MCF 10A (cell line): ENCODE measurements at regions of chr1 and their contacts with region 1.

Region 1: DNA sequence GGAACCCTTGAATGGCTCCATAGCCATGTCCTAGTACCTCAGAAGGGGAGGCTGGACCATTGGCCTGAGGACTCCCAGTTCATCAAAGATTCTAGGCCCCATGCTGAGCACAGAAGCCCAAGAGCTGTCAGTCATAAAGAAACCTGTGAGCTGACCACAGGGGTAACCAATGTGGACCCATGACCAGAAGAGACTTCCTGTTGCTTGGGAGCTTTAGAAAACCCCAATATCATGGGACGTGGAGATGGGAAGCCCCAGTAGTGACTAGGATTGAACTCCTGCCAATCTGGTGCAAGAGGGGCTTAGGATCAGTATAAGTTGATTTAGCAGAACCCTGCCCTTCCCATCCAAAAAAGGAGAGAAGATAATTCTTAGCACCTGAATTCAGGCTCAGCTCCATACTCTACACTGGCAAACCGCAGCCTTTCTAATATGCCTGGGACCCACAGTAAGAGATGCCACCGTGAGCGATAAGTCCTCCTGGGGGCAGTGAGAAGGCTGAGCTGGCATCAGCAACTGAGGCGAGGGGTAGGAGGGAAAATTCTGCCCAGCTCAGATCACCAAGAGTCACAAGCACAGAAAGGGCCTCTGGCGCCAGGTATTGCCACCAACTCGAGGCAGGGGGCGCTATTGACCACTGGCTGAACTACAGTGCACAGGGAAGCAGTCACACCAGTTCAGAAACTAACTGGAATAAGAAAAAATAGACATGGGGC is 108.9 kb downstream of the CAPN8 start:
- DNase-seq: peak; percentile 87
- H3K4me3 Mint-ChIP-seq: no peak overlapping the region
- H3K27ac Mint-ChIP-seq: no peak overlapping the region
- H3K4me1 Mint-ChIP-seq: no peaks in the 10 kb centered on the region
- H3K27me3 Mint-ChIP-seq: no peaks in the 10 kb centered on the region
- CTCF ChIP-seq: peak; percentile 97

Region 2: DNA sequence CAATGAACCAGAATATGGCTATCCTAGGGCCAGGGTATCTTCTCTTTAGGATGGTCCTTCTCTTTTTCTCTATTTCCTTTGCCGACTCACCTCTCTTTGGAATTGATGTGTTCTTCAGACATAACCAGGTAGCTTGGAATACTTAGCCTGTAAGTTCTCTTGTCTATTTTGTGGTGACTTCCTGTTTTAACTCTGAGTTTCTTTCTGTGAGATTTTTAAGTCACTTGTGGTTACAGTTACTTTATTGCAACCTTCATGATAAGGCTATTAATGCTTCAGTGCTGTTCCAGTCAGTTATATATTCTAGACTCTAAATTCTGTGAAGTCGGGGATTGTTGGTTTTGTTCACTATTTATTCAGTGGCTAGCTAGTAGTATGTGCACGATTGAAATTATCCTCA is 695.5 kb before region 1 on chr1:
- CTCF ChIA-PET with region 1: no interaction called
- POLR2A ChIA-PET with region 1: no interaction called
- intact Hi-C with region 1: no loop called
- DNase-seq: no peak
- H3K4me3 Mint-ChIP-seq: no peak overlapping the region
- H3K27ac Mint-ChIP-seq: no peak overlapping the region
- H3K4me1 Mint-ChIP-seq: no peaks in the 10 kb centered on the region
- H3K27me3 Mint-ChIP-seq: no peaks in the 10 kb centered on the region
- CTCF ChIP-seq: no peak

Region 3: DNA sequence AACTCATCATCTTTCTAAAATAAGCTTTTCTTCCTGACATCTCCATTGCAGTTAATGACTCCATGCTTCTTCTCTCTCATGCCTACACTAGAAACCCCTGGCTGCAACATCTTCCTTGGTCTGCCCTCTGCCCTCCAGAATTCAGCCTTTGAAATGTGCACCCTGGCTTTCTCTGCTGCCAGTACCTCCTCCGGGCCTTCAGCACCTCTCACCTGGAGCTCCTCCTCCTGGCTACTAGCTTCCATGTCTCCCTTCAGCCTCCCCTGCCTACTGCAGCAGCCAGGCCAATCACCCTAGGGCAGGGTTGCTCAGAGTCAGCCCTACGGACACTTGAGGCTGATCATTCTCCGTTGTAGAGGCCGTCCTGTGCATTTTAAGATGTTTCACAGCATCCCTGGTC is 210.9 kb before region 1 on chr1:
- CTCF ChIA-PET with region 1: no interaction called
- POLR2A ChIA-PET with region 1: no interaction called
- intact Hi-C with region 1: no loop called
- DNase-seq: no peak
- H3K4me3 Mint-ChIP-seq: no peak overlapping the region
- H3K27ac Mint-ChIP-seq: no peak overlapping the region
- H3K4me1 Mint-ChIP-seq: peaks cover 6% of the 10 kb centered on the region
- H3K27me3 Mint-ChIP-seq: no peaks in the 10 kb centered on the region
- CTCF ChIP-seq: no peak

Region 4: GRCh38 chr1:223401873-223402789 is 154.4 kb before region 1 on chr1:
- CTCF ChIA-PET with region 1: no interaction called
- POLR2A ChIA-PET with region 1: no interaction called
- intact Hi-C with region 1: no loop called
- DNase-seq: peak; percentile 90
- H3K4me3 Mint-ChIP-seq: no peak overlapping the region
- H3K27ac Mint-ChIP-seq: peak overlapping the region; percentile 2
- H3K4me1 Mint-ChIP-seq: peaks cover 24% of the 10 kb centered on the region
- H3K27me3 Mint-ChIP-seq: no peaks in the 10 kb centered on the region
- CTCF ChIP-seq: no peak

Region 5: GRCh38 chr1:223538981-223539380 is 17.6 kb before region 1 on chr1:
- CTCF ChIA-PET with region 1: interaction called, 15 read pairs
- POLR2A ChIA-PET with region 1: no interaction called
- intact Hi-C with region 1: no loop called
- DNase-seq: no peak
- H3K4me3 Mint-ChIP-seq: no peak overlapping the region
- H3K27ac Mint-ChIP-seq: no peak overlapping the region
- H3K4me1 Mint-ChIP-seq: no peaks in the 10 kb centered on the region
- H3K27me3 Mint-ChIP-seq: peaks cover 14% of the 10 kb centered on the region
- CTCF ChIP-seq: no peak

Region 6: DNA sequence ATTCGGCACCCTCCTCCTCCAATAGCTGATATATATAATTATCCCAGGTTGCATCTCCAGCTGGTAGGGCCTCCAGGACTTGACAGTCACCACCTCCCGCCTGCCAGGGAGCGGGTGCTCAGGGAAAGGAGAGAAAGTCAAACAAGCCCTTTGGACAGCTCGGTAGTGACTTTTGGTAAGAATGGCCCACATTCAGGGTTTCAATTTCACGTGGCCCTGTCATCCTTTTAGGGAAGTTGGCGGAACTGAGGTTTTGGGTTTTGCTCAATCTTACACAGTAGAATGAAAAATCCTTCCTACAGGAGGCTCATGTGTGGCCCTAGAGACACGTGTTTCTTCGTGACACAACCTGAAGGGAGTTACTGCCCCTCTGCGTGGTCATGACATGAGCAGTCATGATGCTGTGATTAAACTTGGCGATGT is 64.8 kb after region 1 on chr1:
- CTCF ChIA-PET with region 1: interaction called, 14 read pairs
- POLR2A ChIA-PET with region 1: no interaction called
- intact Hi-C with region 1: no loop called
- DNase-seq: no peak
- H3K4me3 Mint-ChIP-seq: no peak overlapping the region
- H3K27ac Mint-ChIP-seq: no peak overlapping the region
- H3K4me1 Mint-ChIP-seq: no peaks in the 10 kb centered on the region
- H3K27me3 Mint-ChIP-seq: no peaks in the 10 kb centered on the region
- CTCF ChIP-seq: no peak

Region 7: DNA sequence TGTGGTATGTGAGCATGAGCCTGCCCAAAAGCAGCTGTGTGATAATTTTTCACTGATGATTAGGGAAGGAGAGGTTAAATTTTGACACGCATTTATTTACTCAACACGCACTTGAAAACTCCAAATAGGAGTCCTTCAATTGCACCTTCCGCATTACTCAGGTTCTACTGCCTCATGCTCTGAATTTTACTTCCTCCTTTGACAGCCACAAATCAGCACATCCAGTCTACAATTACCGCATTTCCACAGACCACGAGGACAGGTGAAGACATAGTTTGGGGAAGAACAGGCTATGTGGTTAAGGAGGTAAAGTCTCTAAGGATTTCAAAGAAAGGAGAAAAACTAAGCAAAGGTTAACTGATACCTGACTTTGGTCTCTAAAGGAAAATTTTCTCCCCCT is 106.4 kb after region 1 on chr1:
- CTCF ChIA-PET with region 1: interaction called, 12 read pairs
- POLR2A ChIA-PET with region 1: no interaction called
- intact Hi-C with region 1: no loop called
- DNase-seq: no peak
- H3K4me3 Mint-ChIP-seq: no peak overlapping the region
- H3K27ac Mint-ChIP-seq: no peak overlapping the region
- H3K4me1 Mint-ChIP-seq: peaks cover 22% of the 10 kb centered on the region
- H3K27me3 Mint-ChIP-seq: no peaks in the 10 kb centered on the region
- CTCF ChIP-seq: no peak

Region 8: DNA sequence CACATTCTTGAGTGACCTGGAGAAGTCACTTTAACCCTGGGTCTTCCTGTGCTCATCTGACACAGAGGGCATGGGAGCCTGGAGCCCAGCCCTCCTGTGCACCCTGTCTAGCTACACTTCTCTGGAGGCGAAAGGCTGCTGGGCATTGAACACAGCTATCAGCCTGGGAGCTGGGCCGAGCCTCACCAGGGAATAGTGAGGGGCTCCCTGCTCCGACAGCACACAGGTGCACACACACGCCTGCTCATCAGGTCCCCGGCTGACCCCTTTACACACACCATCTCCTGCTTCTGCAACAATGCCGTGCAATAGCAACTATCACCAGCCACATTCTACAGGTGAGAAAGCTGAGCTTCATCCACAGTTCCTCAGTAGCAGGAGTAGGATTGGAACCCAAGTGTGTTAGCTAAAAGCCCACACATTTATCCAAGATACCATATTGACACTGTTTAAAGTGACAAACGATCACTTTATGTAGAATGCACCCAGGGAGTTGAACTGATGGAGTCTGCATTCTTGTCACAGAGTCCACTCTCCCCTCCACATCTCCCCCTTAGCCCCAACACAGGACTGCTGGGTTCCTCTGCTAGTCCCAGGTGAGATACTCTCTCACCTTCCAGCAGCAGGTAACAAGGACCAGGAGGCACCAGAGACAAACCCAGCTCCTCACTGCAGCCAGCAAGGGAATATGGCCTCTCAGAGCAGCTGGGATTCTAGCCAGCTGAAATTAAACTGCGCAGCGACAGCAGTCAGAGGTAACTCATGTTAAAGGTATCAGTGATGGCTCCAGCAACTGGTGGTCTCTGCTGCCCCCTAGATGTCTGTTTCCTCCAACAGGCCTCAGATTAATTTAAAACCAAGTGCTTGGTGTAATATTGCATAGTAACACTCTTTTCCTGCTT is 127.3 kb after region 1 on chr1:
- CTCF ChIA-PET with region 1: interaction called, 22 read pairs
- POLR2A ChIA-PET with region 1: no interaction called
- intact Hi-C with region 1: no loop called
- DNase-seq: peak; percentile 85
- H3K4me3 Mint-ChIP-seq: no peak overlapping the region
- H3K27ac Mint-ChIP-seq: no peak overlapping the region
- H3K4me1 Mint-ChIP-seq: peaks cover 6% of the 10 kb centered on the region
- H3K27me3 Mint-ChIP-seq: no peaks in the 10 kb centered on the region
- CTCF ChIP-seq: peak; percentile 94

Region 9: GRCh38 chr1:223827193-223827663 is 270.7 kb after region 1 on chr1:
- CTCF ChIA-PET with region 1: no interaction called
- POLR2A ChIA-PET with region 1: no interaction called
- intact Hi-C with region 1: no loop called
- DNase-seq: peak; percentile 42
- H3K4me3 Mint-ChIP-seq: no peak overlapping the region
- H3K27ac Mint-ChIP-seq: peak overlapping the region; percentile 7
- H3K4me1 Mint-ChIP-seq: peaks cover 41% of the 10 kb centered on the region
- H3K27me3 Mint-ChIP-seq: no peaks in the 10 kb centered on the region
- CTCF ChIP-seq: no peak